PC-9 (cell line): ENCODE measurements at regions of chr12 and their contacts with region 1.

Region 1: GRCh38 chr12:120628919-120629318 is 11.5 kb upstream of the CABP1 start:
- DNase-seq: no peak
- H3K4me3 ChIP-seq: no peak overlapping the region
- H3K27ac ChIP-seq: no peak overlapping the region
- H3K4me1 ChIP-seq: no peaks in the 10 kb centered on the region
- H3K27me3 ChIP-seq: no peaks in the 10 kb centered on the region
- CTCF ChIP-seq: no peak

Region 2: DNA sequence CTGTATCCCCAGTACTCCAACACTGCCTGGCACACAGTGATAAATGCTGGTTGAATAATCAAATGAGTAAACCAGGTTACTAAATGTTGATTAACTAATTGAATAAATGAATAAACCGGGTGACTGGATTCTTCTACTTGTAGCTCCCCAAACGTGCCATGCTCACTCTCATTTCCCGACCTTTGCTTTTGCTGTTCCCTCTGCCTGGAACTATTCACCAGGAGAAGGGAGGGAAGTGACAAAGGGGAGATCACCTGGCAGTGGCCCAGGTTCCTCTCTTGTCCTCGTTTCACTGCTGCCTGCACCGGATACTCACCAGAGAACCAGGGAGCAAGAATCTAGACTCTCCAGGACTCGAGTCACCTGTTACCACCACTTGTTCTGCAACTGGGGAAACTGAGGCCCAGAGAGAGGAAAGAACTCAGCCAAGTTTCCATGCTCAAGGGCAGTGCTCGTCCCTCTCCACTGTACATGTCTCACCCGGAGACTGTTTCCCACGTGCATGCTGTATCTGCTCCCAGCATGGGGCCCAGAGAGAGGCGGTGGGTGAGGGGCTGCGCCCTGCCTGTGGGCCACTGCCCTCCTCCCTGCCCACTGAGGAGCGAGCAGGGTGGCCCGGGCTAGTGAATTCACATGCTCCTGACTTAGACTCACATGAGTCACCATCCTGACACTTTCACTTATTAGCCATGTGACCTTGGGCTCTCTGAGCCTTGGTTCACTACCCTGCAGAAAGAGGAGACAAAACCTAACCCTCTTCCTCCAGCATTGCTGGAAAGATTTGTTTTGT is 30.1 kb before region 1 on chr12:
- CTCF ChIA-PET with region 1: no interaction called
- POLR2A ChIA-PET with region 1: interaction called, 21 read pairs
- intact Hi-C with region 1: no loop called
- DNase-seq: peak; percentile 23 to 65
- H3K4me3 ChIP-seq: no peak overlapping the region
- H3K27ac ChIP-seq: no peak overlapping the region
- H3K4me1 ChIP-seq: peaks cover 26% of the 10 kb centered on the region
- H3K27me3 ChIP-seq: no peaks in the 10 kb centered on the region
- CTCF ChIP-seq: no peak